ENCODE measurements at regions of chr4 and their contacts with region 1.

Region 1: GRCh38 chr4:1726146-1726934 is 5.0 kb downstream of the TACC3 start:
- DNase-seq: peak; percentile 67
- H3K4me3 ChIP-seq: no peak overlapping the region
- H3K27ac ChIP-seq: peak overlapping the region; percentile 49
- H3K4me1 ChIP-seq: peaks cover 54% of the 10 kb centered on the region
- H3K27me3 ChIP-seq: no peaks in the 10 kb centered on the region
- CTCF ChIP-seq: peak; percentile 94 to 98

Region 2: DNA sequence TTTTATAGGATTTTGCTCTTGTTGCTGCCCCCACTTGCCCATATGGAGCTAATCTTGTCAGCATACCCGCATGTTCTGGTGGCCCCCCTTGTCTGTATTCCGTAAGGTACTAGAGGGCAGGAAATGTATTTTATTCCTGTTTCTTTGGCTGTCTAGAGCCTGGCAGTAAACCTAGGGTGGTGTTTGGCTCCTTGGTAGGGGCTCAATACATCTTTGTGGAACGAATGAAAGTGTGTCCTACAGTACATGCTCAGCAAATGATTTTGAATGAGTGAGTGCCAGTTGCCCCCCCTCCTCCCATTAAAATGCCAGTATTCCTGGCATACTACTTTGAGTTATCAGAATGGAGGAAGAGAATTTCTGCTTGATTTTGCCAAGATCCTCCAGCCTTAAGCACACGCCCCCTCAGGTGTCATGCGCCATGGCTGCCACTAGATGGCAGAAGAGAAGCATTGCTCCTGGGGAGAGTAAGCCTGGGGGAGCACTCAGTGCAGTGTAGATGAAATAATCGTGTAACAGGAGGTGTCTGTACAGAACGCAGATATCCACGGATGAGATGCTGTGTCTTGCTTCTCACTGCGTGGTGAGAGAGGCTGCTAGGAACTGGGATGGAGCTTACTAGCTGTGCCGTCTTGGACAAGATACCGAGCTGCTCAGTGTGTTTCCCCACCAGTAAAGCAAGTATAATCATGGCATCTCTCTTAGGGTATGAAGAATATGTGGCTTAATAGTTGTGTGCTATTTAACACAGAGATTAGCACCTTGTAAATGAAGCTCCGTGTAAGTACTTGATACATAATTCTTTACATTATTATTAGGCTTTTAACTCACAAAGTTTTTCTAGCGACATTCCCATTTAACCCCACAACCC is 595.8 kb before region 1 on chr4:
- CTCF ChIA-PET with region 1: interaction called, 4 read pairs
- dilution Hi-C with region 1: no loop called
- in situ Hi-C with region 1: no loop called
- intact Hi-C with region 1: loop called (anchors 5 kb)
- DNase-seq: peak; percentile 60
- H3K4me3 ChIP-seq: no peak overlapping the region
- H3K27ac ChIP-seq: no peak overlapping the region
- H3K4me1 ChIP-seq: no peaks in the 10 kb centered on the region
- H3K27me3 ChIP-seq: no peaks in the 10 kb centered on the region
- CTCF ChIP-seq: peak; percentile 99 to 100

Region 3: DNA sequence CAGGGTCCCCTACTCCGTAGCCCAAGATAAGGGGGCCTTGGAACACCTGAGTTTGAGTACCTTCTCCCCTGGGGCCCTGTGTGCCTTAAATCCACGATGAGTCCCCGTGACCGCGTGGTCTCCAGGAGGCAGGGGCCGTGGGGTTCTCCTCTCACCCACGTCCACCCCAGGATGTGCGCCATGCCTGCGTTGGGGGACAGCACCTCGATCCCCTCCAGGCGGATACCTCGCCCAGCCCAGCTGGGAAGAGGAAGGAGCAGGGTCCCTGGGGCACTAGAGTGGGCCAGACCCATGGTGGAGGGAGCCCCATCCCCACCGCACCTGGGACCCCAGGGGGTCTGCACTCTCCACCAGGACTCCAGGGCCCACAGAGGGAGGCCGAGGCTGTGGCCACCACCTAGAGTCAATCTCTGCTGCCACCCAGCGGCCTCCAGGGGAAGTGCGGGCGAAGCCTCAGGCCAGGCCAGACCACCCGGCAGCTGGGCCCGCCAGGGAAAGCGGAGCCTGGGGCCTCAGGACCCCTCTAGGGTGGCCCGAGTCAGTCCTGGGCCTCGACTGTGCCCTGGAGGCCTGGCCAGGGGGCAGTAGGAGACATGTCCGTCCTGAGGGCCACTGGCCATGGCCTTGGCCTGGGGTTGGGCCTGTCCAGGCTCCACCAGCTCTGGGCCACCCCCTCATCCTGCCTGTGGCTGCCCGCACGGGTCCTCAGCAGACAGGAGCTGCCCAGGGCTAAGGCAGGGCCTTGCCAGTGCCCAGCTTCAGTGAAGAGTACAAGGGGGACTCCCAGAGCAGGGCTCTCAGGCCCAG is 97.2 kb before region 1 on chr4:
- CTCF ChIA-PET with region 1: no interaction called
- dilution Hi-C with region 1: no loop called
- in situ Hi-C with region 1: no loop called
- intact Hi-C with region 1: loop called (anchors 5 kb)
- DNase-seq: peak; percentile 17
- H3K4me3 ChIP-seq: no peak overlapping the region
- H3K27ac ChIP-seq: no peak overlapping the region
- H3K4me1 ChIP-seq: no peaks in the 10 kb centered on the region
- H3K27me3 ChIP-seq: no peaks in the 10 kb centered on the region
- CTCF ChIP-seq: peak; percentile 89 to 97

Region 4: GRCh38 chr4:1712216-1713002 is 13.9 kb before region 1 on chr4 and contains the start of gene SLBP:
- CTCF ChIA-PET with region 1: no interaction called
- dilution Hi-C with region 1: no loop called
- in situ Hi-C with region 1: no loop called
- intact Hi-C with region 1: loop called (anchors 1 kb)
- DNase-seq: peak; percentile 96
- H3K4me3 ChIP-seq: peak within 1 kb of the TSS; percentile 70 to 93 (median 83)
- H3K27ac ChIP-seq: peak within 1 kb of the TSS; percentile 89
- H3K4me1 ChIP-seq: peaks cover 17% of the 10 kb centered on the region
- H3K27me3 ChIP-seq: no peaks in the 10 kb centered on the region
- CTCF ChIP-seq: no peak
- total RNA-seq, gene SLBP: 38.0 to 55.7 TPM

Region 5: GRCh38 chr4:1767770-1768366 is 41.5 kb after region 1 on chr4:
- CTCF ChIA-PET with region 1: no interaction called
- dilution Hi-C with region 1: no loop called
- in situ Hi-C with region 1: no loop called
- intact Hi-C with region 1: no loop called
- DNase-seq: no peak
- H3K4me3 ChIP-seq: peak overlapping the region in 1 of 3 experiments; percentile 16
- H3K27ac ChIP-seq: no peak overlapping the region
- H3K4me1 ChIP-seq: peaks cover 14% of the 10 kb centered on the region
- H3K27me3 ChIP-seq: no peaks in the 10 kb centered on the region
- CTCF ChIP-seq: no peak

Region 6: GRCh38 chr4:2186133-2186864 is 460.0 kb after region 1 on chr4:
- CTCF ChIA-PET with region 1: no interaction called
- dilution Hi-C with region 1: no loop called
- in situ Hi-C with region 1: loop called in 1 of 2 experiments (anchors 25 kb)
- intact Hi-C with region 1: no loop called
- DNase-seq: peak; percentile 58
- H3K4me3 ChIP-seq: no peak overlapping the region
- H3K27ac ChIP-seq: no peak overlapping the region
- H3K4me1 ChIP-seq: no peaks in the 10 kb centered on the region
- H3K27me3 ChIP-seq: no peaks in the 10 kb centered on the region
- CTCF ChIP-seq: peak; percentile 53 to 82